ENCODE measurements at regions of chr6 and their contacts with region 1.

Region 1: DNA sequence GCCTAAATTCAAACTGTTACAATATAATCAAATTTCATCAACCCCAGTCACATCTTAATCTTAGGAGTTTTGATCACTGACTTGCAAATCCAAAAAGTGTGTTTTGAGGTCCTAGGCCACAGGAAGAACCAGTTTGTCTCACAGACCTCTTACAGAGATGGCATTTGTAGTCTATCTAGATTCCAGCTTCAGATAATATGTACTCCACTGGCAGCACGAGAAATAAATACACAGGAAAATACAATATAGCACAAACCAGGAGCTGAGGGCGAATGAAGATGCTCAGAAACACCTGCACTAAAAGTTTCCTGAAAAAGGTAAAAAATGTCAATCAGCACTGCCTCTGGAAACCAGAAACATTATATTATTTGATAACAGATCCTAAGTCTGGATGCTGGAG is 647 bp upstream of the BTN3A3 start:
- DNase-seq: peak in 1 of 5 donors; percentile 31
- H3K4me3 ChIP-seq: peak overlapping the region in 1 of 2 donors; percentile 95
- H3K4me3 Mint-ChIP-seq: peak overlapping the region; percentile 93 to 100 (median 98)
- H3K27ac ChIP-seq: peak overlapping the region; percentile 97
- H3K27ac Mint-ChIP-seq: peak overlapping the region; percentile 97 to 100 (median 99)
- H3K4me1 ChIP-seq: peaks cover 37% of the 10 kb centered on the region
- H3K4me1 Mint-ChIP-seq: peaks cover 23 to 55% (median 45%) of the 10 kb centered on the region in 4 donors
- H3K27me3 ChIP-seq: no peaks in the 10 kb centered on the region
- H3K27me3 Mint-ChIP-seq: no peaks in the 10 kb centered on the region

Region 2: GRCh38 chr6:26421259-26422144 is 18.2 kb before region 1 on chr6:
- CTCF ChIA-PET with region 1: no interaction called
- POLR2A ChIA-PET with region 1: no interaction called
- intact Hi-C with region 1: loop called (anchors 1 kb)
- DNase-seq: peak; percentile 63 to 69 (median 67)
- H3K4me3 ChIP-seq: peak overlapping the region; percentile 86 to 97
- H3K4me3 Mint-ChIP-seq: no peak overlapping the region
- H3K27ac ChIP-seq: peak overlapping the region; percentile 65
- H3K27ac Mint-ChIP-seq: peak overlapping the region in 1 of 7 donors; percentile 90
- H3K4me1 ChIP-seq: peaks cover 10% of the 10 kb centered on the region
- H3K4me1 Mint-ChIP-seq: peaks cover 2 to 12% (median 5%) of the 10 kb centered on the region in 4 donors
- H3K27me3 ChIP-seq: no peaks in the 10 kb centered on the region
- H3K27me3 Mint-ChIP-seq: no peaks in the 10 kb centered on the region